ENCODE measurements at regions of chr22 and their contacts with region 1.

Region 1: DNA sequence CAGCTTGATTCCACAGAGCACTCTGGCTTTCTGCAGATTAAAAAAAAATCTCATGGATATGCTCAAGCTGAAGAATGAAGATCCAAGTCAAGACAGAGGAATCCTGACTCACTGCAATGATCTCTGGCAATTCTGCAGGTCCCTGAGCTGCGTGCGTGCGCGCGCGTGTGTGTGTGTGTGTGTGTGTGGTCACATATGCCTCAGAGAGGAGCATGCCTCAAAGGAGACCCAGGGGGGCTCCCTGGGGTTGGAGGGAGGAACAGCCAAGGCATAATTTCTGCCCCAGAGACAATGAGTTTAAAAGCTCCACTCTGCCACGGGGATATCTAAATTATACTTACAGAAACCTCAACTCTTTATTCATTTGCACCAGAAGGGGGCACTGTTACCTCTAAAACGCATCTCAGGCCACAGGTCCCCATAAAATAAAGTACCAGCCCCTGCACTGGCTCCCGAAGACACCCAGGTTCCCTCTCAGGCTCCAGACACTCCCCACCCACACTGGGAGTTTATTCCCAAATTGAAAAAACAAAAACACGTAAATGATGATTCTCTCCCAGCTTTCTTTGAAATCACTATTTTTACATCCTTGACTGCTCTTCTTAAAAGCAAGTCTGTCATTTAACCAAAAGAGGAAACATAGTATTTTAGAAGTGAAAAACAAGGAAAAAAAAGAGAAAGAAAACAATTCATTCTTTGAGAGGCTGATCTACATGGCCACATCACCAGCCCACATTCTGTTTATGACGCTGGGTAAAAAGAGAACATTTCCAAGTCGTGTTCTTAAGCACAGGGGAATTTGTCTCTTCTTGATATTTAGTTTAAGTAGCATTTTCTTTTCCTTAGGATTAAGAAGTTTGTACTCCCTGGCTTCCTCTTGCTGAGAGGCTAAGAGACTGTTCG is 401.0 kb downstream of the LARGE1 start:
- H3K4me3 ChIP-seq: no peak overlapping the region
- H3K27ac ChIP-seq: no peak overlapping the region
- H3K4me1 ChIP-seq: no peaks in the 10 kb centered on the region
- CTCF ChIP-seq: no peak

Region 2: DNA sequence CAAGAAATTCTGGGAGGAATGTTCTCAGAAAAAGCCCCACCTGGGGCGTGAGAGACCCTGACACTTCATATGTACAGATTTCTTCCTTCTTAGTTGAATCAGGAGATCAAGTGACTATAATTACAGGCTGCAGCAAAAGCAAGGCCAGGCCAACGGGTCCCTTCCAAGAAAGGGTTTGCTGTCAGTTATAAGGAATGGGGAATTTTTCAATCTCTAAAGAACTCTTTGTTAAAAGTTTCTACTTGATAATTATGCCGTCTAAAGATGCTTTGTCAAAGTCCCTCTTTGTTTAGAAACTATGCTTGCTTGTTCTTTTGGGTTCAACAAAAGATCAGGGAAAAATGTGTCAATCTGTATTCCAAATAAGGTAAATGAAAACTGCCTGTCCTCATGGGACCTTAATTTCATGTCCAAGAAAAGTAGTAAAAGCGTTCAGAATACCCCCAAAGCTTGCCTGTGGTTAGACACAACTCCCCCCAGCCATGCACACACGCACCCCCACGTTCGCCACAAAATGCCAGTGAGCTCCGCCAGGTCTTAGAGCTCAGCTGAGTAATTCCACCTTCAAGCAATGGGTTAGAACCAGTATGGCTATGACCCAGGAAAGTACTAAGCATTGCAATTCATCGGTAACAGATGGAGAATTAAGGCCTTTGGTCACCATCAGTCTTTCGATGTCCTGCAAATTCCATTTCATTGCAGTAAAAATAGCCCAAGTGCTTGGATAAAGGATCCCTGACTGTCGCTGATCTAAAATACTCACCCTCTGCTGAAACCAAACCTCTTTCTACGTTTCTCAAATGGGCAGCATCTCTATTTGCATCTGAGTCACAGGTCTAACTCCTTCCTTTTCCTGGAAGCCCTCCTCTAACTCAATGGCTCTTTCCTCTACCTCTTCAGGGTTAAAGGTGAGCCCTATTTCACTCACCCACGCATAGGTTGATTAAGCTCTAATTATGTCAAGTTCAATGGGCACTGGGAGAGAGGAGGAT is 41.9 kb before region 1 on chr22:
- CTCF ChIA-PET with region 1: no interaction called
- POLR2A ChIA-PET with region 1: no interaction called
- H3K4me3 ChIP-seq: no peak overlapping the region
- H3K27ac ChIP-seq: no peak overlapping the region
- H3K4me1 ChIP-seq: peaks cover 9% of the 10 kb centered on the region
- CTCF ChIP-seq: no peak

Region 3: DNA sequence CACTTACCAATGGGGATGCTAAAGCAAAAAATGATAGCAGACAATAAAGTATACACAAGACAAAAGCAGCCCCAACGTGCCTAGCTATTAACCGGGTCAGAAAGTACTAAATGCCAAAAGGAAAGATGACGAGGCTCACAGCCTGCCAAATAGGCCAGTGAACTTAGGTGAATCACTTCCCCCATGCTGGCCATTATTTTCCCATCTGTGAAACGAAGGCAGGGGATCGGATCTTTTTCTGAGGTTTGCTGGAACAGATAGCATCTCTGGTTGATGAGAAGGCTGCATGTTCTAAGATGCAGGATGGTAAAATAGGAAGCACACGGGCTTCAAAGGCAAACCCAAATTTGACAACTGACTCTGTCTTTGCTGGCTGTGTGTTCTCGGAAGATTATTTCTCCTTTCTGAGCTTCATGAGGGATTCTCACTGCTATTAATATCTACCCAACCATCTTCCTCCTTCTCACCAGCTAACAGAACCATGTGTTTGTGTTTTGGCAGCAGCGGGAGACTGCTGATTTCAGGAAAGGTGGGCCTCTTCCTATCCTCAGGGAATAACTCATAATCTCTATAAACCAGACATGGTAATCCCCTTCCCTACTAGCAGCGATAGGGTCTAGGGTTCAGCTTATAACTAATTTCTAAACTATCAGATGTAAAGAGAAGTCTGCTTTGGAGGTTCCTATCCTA is 10.2 kb after region 1 on chr22:
- CTCF ChIA-PET with region 1: interaction called, 10 read pairs
- POLR2A ChIA-PET with region 1: no interaction called
- H3K4me3 ChIP-seq: no peak overlapping the region
- H3K27ac ChIP-seq: no peak overlapping the region
- H3K4me1 ChIP-seq: peaks cover 5% of the 10 kb centered on the region
- CTCF ChIP-seq: no peak

Region 4: DNA sequence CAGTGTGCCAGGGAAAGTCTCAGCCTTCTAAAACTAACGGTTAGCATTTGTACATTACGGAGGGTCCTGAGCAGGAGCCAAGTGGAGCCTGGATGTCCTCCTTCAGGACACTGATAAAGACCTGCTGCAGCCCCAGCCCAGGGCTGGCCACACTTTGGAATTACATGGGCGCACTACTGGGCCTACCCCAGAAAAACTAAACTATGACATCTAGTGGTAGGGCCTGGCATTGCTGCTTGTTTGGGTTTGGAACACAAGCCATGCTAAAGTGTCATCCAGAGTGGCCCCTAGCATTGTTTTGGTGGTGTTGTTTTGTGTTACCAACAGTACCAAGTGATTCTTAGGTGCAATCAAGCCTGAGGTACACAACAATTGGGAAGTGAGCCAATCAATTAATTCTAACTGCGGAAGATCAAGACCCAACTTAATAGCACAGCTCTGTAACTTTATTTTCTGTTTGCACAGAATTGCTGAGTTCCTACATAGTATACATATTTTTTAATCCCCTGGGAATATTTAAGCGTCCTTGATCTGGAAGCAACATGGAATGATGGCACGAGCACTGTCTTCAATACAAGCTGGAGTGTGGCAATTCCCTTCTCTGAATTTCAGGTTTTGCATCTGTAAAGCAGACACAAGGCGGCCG is 60.2 kb after region 1 on chr22:
- CTCF ChIA-PET with region 1: interaction called, 28 read pairs
- POLR2A ChIA-PET with region 1: no interaction called
- H3K4me3 ChIP-seq: no peak overlapping the region
- H3K27ac ChIP-seq: no peak overlapping the region
- H3K4me1 ChIP-seq: peaks cover 9% of the 10 kb centered on the region
- CTCF ChIP-seq: peak; percentile 66

Region 5: DNA sequence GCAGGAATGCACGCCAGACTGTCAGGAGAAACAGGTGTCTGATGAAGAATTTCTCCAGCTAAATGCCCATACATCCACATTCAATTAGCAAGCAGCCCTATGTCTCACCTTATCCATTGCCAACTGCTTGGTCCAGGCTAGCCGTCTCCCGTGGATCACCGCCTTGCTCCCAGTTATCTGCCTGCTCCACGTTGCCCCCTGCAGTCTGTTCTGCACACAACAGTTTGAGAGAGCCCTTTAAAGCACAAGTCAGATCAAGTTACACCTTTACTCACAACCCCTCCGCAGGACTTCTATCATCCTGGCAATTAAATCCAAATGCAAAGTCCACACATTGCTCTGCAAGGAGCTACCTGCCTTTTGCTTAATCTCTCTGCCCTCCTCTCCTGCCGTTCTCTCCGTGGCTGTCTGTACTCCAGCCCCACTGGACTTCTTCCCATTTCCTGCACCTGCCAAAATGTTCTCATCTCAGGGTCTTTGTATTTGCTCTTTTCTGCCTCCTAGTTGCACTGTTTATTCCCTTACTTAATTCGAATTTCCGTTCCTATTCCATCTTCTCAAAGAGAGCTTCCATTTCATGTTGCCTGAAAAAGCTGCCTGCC is 586.2 kb after region 1 on chr22:
- CTCF ChIA-PET with region 1: interaction called, 13 read pairs
- POLR2A ChIA-PET with region 1: no interaction called
- H3K4me3 ChIP-seq: no peak overlapping the region
- H3K27ac ChIP-seq: no peak overlapping the region
- H3K4me1 ChIP-seq: no peaks in the 10 kb centered on the region; the same call in 1 of the 2 replicates
- CTCF ChIP-seq: no peak; the same call in 1 of the 2 replicates